ENCODE measurements at regions of chr16 and their contacts with region 1.

Region 1: GRCh38 chr16:47779201-47780016 is 318.3 kb downstream of the PHKB start:
- DNase-seq: peak in 9 of 10 donors; percentile 4 to 76 (median 53)
- H3K4me3 ChIP-seq: peak overlapping the region in 38 of 59 donors; percentile 2 to 48 (median 27)
- H3K27ac ChIP-seq: peak overlapping the region in 48 of 59 donors; percentile 8 to 84 (median 54)
- H3K27me3 ChIP-seq: no peaks in the 10 kb centered on the region
- CTCF ChIP-seq: no peak

Region 2: DNA sequence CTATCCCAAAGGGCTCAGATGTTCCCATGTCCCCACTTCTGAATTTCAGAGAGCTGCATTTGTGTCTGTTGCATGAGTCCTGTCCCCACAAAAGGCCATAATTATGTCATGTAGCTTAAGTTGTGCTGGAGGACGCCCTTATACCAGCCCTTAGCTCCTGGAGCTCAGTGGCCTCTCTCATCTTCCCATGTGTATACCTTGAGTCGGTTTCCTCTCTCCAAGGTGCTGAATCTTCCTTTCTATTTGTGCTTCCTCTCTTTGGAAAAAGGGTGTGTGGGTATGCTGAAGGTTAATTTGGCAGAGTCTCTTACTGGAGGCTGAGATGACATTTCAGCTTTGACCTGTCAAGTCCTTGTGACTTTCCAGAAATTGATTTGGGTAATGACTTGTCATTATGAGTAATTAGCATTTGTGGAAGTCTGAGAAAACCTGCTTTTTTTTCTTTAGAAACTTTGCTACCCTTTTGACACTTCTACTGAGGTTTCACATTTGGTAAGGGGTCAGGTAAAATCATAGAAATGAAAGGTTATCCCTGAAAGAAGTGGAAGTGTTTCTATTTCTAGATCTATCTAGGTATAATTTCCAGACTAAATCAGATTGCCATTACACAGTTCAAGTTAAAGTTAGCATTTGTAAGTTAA is 191.0 kb after region 1 on chr16:
- intact Hi-C with region 1: loop called in 1 of 2 experiments (anchors 10 kb)
- DNase-seq: no peak
- H3K4me3 ChIP-seq: no peak overlapping the region
- H3K27ac ChIP-seq: no peak overlapping the region
- H3K27me3 ChIP-seq: no peaks in the 10 kb centered on the region
- CTCF ChIP-seq: no peak

Region 3: DNA sequence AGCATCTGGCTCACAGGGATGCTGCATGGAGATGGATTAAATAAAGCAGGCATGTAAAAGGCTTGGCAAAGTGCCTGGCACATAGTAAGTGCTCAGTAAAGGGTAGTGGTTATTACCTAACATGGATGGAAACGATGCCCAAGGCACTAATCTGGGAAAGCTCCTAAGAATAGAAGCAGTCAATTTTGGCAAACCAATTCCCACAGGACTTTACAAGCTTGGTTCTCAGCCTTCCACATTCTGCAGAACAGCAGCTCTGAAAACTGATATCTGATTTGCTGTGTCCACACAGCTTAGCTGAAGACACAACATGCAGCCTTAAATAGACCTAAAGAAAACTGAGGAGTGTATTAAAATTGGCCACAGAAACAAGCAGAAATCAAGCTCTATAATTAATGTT is 200.4 kb after region 1 on chr16:
- intact Hi-C with region 1: loop called (anchors 10 kb)
- DNase-seq: peak in 1 of 10 donors; percentile 29
- H3K4me3 ChIP-seq: no peak overlapping the region
- H3K27ac ChIP-seq: peak overlapping the region in 22 of 59 donors; percentile 1 to 67 (median 28)
- H3K27me3 ChIP-seq: no peaks in the 10 kb centered on the region
- CTCF ChIP-seq: no peak

Region 4: GRCh38 chr16:48054881-48055601 is 275.6 kb after region 1 on chr16:
- intact Hi-C with region 1: loop called in 1 of 2 experiments (anchors 10 kb)
- DNase-seq: peak; percentile 44 to 82 (median 73)
- H3K4me3 ChIP-seq: peak overlapping the region; percentile 12 to 72 (median 51)
- H3K27ac ChIP-seq: peak overlapping the region; percentile 41 to 96 (median 88)
- H3K27me3 ChIP-seq: no peaks in the 10 kb centered on the region
- CTCF ChIP-seq: peak; percentile 67 to 92 (median 86)

Measured in dorsolateral prefrontal cortex (tissue), 120 donors.